Left lung (tissue), 14 donors: ENCODE measurements at regions of chr15 and their contacts with region 1.

Region 1: DNA sequence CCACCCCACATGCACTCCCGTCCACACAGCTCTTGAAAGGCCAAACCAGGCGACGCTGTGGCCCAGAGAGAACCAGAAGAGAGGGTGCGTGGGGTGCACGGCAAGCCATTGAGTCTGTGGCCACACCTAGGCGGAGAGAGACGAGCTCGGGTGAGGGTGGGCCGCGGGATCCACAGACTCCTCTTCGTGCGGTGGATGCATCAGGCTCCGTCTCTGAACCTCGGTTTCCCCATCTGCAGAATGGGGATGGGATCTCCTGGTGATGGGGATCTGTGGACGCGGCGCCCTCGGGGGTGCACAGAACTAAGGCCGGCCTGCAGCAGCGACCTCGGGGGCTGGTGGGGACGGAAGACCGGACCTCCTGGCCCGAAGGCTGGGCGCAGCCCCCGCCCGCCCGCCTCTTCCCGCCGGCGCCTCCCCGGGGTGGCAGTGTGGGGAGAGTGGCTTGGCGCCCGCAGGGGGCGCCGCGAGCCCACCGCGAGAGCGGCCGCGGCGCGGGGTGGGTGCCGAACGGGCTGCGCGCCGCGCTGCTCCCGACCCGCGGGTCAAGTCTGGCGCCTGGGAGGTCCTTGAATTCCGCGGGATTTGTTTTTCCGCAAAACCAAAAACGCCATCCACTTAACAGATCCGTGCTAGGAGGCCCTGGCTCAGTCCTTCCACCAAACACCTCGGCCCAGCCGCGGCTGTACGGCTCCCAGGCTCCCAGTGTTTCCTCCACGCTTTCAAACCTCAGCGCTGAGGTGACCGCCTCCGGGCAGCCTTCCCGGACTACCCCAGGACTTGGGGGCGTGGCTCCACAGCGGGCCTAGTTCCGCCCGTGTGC is 13.2 kb upstream of the ADPGK start:
- DNase-seq: peak; percentile 42 to 92 (median 67)
- ATAC-seq: peak; percentile 90
- H3K4me3 ChIP-seq: peak overlapping the region; percentile 44 to 46
- H3K27ac ChIP-seq: no peak overlapping the region
- H3K4me1 ChIP-seq: peaks cover 3 to 17% of the 10 kb centered on the region in 2 donors
- H3K27me3 ChIP-seq: peaks cover 0 to 58% of the 10 kb centered on the region in 2 donors
- CTCF ChIP-seq: peak; percentile 56 to 65

Region 2: DNA sequence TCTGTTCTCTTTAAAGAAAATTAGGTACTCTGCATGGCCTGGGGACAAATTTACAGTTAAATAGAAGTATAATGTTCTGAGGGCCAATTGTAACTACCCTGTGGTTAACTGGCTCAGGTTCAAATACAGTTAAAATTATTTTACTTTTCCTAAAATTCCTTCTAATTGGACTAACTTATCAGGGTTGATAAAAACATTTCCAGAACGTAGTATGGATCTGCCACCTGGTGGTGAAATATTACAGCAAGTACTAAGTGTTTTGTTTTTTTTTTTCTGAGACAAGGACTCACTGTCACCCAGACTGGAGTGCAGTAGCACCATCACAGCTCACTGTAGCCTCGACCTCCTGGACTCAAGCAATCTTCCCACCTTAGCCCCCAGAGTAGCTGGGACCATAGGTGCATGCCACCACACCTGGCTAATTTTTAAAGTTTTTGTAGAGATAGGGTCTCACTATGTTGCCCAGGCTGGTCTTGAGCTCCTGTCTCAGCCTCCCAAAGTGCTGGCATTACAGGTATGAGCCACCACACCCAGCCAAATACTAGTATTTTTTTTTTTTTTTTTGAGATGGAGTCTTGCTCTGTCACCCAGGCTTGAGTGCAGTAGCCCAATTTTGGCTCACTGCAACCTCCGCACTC is 284.7 kb after region 1 on chr15:
- intact Hi-C with region 1: loop called in 1 of 2 experiments (anchors 10 kb)
- DNase-seq: peak in 2 of 4 donors; percentile 58 to 73
- ATAC-seq: peak; percentile 72
- H3K4me3 ChIP-seq: no peak overlapping the region
- H3K27ac ChIP-seq: no peak overlapping the region
- H3K4me1 ChIP-seq: peaks cover 8 to 25% of the 10 kb centered on the region in 2 donors
- H3K27me3 ChIP-seq: no peaks in the 10 kb centered on the region
- CTCF ChIP-seq: peak; percentile 30 to 52